ENCODE measurements at regions of chr2 and their contacts with region 1.

Region 1: GRCh38 chr2:240424341-240425235 is 10.9 kb upstream of the GPC1 start:
- DNase-seq: no peak
- H3K4me3 ChIP-seq: no peak overlapping the region
- CTCF ChIP-seq: no peak

Region 2: GRCh38 chr2:240220371-240220770 is 204.2 kb before region 1 on chr2:
- in situ Hi-C with region 1: loop called (anchors 5 kb)
- DNase-seq: no peak
- H3K4me3 ChIP-seq: no peak overlapping the region
- CTCF ChIP-seq: no peak

Region 3: GRCh38 chr2:240339996-240340761 is 84.4 kb before region 1 on chr2:
- in situ Hi-C with region 1: loop called (anchors 5 kb)
- DNase-seq: no peak
- H3K4me3 ChIP-seq: no peak overlapping the region
- CTCF ChIP-seq: no peak

Measured in astrocyte of the cerebellum (primary cell).